RWPE1 (cell line): ENCODE measurements at regions of chr11 and their contacts with region 1.

Region 1: GRCh38 chr11:118171269-118172062 is 5.0 kb downstream of the SCN2B start:
- DNase-seq: peak; percentile 79
- H3K27ac ChIP-seq: no peak overlapping the region
- CTCF ChIP-seq: peak; percentile 90

Region 2: GRCh38 chr11:117919781-117920221 is 251.7 kb before region 1 on chr11:
- CTCF ChIA-PET with region 1: no interaction called
- POLR2A ChIA-PET with region 1: no interaction called
- DNase-seq: no peak
- H3K27ac ChIP-seq: no peak overlapping the region
- CTCF ChIP-seq: no peak

Region 3: DNA sequence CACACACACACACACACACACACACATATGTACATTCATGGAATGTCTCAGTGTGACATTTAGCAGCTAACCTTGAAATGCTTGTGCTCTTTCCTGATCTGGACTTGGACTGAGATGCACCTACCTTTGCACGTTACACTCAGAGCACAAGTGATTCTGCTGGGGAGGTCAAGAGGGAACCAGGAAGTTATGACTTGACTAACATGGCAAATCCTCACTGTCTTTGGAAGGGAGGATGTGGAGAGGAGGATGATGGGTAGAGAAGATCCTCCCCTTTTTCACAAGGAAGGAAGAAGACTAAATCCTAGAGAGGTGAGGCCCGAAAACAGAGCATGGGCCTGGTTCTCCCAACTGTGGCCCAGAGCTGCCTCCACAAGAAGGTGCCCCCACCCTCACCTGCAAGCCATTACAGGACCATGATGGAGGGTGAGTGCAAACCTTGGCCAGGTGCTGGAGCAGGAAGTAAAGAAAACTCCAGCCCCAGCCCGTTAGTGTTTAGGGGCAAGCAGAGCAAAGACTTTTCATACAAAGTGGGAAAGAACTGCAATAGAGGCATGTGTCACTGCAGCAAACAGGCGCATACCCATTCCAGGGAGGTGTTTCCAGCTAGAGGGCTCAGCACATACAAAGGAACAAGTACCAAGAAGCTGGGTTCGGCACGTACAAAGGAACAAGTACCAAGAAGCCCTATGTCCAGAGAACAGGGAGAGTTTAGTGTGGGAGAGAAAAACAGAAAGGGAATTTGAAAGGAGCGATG is 45.2 kb before region 1 on chr11:
- CTCF ChIA-PET with region 1: no interaction called
- POLR2A ChIA-PET with region 1: no interaction called
- DNase-seq: peak; percentile 34
- H3K27ac ChIP-seq: no peak overlapping the region
- CTCF ChIP-seq: no peak

Region 4: DNA sequence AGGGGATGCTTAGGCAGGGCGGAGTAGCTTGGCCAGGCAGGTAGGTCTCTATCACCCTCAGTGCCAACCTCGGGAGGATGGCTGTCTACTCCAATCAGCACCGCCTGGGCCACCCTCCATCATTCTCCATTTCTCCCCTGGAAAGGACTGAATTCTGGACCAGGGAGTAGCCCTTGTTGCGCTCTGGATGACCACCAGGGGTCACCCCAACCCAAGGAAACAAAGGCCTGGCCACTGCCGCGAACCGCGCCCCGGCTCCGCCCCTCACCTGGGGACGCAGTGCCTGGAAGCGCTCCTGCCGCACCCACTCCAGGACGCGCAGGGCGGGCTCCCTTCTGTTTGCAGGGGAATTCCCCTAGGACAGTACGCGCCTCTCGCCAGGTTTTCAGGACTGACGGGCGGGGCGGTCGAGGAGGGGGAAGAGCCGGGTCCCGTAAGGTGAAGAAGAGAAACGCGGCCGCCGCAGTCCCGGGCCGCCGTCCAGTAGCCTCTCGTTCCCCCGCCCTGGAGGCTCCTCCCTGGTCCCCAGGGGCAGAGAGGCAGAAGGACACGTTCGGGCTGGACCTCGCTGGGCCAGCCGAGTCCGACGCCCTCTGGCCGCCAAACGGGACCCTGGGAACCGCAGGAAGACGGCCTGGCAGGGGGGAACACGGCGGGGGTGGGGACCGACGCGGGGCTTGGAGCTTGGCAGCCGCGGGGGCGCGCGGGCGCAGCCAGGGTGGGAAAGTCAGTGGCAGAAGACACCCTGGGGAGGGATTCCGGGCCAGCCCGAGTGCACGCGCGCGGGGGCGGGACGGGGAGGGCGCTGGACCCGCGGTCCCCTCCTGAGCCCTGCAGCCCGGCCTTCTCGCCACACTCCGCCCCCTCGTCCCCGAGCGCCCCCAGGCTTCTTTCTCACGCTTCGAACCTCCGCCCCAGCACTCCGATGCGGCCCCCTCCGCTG is 25.9 kb before region 1 on chr11:
- CTCF ChIA-PET with region 1: interaction called, 47 read pairs
- POLR2A ChIA-PET with region 1: no interaction called
- DNase-seq: peak; percentile 97
- H3K27ac ChIP-seq: peak overlapping the region; percentile 65
- CTCF ChIP-seq: peak; percentile 84

Region 5: DNA sequence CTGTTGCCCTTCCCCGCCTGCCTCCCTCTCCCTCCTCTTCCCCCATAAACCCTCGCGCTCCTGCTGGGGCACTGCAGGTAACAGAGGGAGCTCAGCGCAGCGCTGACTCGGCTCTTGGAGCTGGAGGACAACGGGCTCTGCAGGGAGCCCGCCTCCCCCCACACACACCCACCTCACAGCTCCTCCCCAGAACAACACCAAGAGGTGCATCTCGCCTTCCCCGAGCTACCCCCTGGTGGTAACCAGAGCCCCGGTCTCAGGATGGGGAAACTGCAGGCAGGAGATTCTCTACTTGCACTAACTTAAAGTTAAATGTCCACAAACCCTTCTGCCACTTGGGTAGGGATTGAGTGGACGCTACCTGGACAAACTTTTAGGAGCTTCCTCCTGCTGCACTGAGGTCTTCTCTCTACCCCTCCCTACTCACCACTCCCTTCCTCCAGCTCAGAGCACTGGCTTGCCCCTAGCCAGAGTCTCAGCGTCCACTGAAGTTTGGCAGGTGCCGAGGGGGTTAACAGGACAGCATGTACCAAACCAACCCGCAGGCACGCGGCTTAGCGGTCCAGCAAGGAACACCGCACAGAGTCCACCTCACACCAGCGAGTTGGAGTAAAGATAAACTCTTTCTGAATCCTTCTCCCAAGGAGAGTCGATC is 14.8 kb before region 1 on chr11:
- CTCF ChIA-PET with region 1: interaction called, 16 read pairs
- POLR2A ChIA-PET with region 1: interaction called, 3 read pairs
- DNase-seq: no peak
- H3K27ac ChIP-seq: no peak overlapping the region
- CTCF ChIP-seq: no peak

Region 6: DNA sequence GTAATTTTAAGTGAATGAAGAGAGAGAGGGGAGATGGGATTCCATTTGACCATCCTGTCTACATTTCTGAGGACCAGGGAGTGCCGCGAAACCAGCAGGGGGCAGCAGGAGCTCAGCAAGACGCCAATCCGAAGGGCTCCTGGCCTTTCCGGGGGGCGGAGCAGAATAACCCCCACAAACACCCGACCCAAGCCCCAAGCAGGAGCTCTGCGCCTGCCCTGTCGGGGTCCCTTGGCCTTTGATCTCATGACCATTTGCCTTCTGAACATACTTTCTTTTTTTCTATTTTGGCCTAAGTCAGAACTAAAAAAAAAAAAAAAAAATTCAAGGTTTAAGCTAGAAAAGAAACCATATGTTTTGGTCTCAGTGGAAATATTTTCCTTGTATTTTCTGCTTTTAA is 26.9 kb after region 1 on chr11:
- CTCF ChIA-PET with region 1: interaction called, 10 read pairs
- POLR2A ChIA-PET with region 1: no interaction called
- DNase-seq: peak; percentile 60
- H3K27ac ChIP-seq: no peak overlapping the region
- CTCF ChIP-seq: peak; percentile 86